AG04450 (cell line): ENCODE measurements at regions of chr12 and their contacts with region 1.

Region 1: GRCh38 chr12:77954206-77954555 is 123.5 kb downstream of the NAV3 start:
- DNase-seq: peak; percentile 30
- H3K4me3 ChIP-seq: no peak overlapping the region
- H3K27ac ChIP-seq: no peak overlapping the region
- H3K27me3 ChIP-seq: no peaks in the 10 kb centered on the region
- CTCF ChIP-seq: no peak

Region 2: GRCh38 chr12:77979597-77980250 is 25.5 kb after region 1 on chr12:
- CTCF ChIA-PET with region 1: interaction called, 12 read pairs
- POLR2A ChIA-PET with region 1: no interaction called
- DNase-seq: no peak
- H3K4me3 ChIP-seq: no peak overlapping the region
- H3K27ac ChIP-seq: no peak overlapping the region
- H3K27me3 ChIP-seq: no peaks in the 10 kb centered on the region
- CTCF ChIP-seq: no peak

Region 3: DNA sequence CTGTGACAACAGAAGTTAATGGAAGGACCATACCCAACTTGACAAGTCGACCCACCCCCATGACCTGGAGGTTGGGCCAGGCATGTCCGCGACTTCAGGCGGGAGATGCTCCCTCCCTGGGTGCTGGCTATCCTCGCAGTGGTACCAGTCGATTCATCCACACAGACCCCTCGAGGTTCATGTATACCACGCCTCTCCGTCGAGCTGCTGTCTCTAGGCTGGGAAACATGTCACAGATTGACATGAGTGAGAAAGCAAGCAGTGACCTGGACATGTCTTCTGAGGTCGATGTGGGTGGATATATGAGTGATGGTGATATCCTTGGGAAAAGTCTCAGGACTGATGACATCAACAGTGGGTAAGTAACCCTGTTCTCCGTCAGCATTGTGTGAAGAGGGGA is 96.6 kb after region 1 on chr12:
- CTCF ChIA-PET with region 1: no interaction called
- POLR2A ChIA-PET with region 1: no interaction called
- DNase-seq: no peak
- H3K4me3 ChIP-seq: no peak overlapping the region
- H3K27ac ChIP-seq: no peak overlapping the region
- H3K27me3 ChIP-seq: no peaks in the 10 kb centered on the region
- CTCF ChIP-seq: no peak